ENCODE measurements at regions of chr3 and their contacts with region 1.

Region 1: GRCh38 chr3:152298393-152299242 is 29.9 kb downstream of the MBNL1 start:
- DNase-seq: peak; percentile 40 to 60 (median 52)
- ATAC-seq: peak; percentile 80 to 88 (median 84)
- H3K4me3 ChIP-seq: peak overlapping the region in 11 of 12 donors; percentile 16 to 59 (median 47)
- H3K27ac ChIP-seq: peak overlapping the region; percentile 35 to 91 (median 82)
- H3K4me1 ChIP-seq: peaks cover 7 to 99% (median 68%) of the 10 kb centered on the region in 12 donors
- H3K27me3 ChIP-seq: no peaks in the 10 kb centered on the region
- CTCF ChIP-seq: no peak
- POLR2A ChIP-seq: no peak

Region 2: GRCh38 chr3:152436707-152437590 is 138.3 kb after region 1 on chr3:
- intact Hi-C with region 1: loop called in 1 of 10 experiments (anchors 10 kb)
- DNase-seq: no peak
- ATAC-seq: peak in 3 of 4 donors; percentile 48 to 76 (median 55)
- H3K4me3 ChIP-seq: no peak overlapping the region
- H3K27ac ChIP-seq: peak overlapping the region in 11 of 12 donors; percentile 2 to 64 (median 48)
- H3K4me1 ChIP-seq: peaks cover 4 to 57% (median 36%) of the 10 kb centered on the region in 12 donors
- H3K27me3 ChIP-seq: no peaks in the 10 kb centered on the region
- CTCF ChIP-seq: no peak
- POLR2A ChIP-seq: no peak

Measured in heart left ventricle (tissue), 16 donors.